Tibial artery (tissue), 4 donors: ENCODE measurements at regions of chr14 and their contacts with region 1.

Region 1: DNA sequence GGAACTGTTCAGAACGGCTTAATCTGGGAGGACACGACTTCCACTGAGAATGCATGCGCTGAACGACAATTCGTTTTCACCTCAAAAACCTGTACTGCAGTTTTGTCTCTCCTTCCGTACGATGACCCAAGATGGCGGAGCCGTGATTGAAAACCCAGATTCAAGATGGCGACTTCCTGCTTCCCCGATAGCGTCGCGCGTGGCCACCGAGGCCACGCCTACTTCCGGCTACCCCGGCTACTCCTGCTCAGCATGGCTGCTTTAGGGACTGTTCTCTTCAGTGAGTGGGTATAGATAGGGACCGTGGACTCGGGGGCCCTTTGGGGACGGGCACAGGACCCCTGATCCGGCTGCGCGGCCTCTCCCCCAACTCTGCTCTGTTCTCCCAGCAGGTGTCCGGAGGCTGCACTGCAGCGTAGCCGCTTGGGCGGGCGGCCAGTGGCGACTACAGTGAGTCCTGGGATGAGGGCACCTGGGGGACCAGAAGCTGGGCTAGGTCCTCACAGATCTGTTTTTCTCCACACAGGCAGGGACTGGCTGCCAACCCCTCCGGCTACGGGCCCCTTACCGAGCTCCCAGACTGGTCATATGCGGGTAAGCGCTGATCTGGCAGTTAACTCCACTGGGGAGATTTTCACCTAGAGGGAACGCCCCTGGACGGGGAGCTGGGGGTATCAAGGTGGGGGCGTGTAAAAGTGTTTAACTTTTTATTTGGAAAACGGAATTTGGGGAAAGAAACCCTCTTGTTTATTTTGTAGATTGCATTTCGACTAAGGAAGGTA is at the start of gene MRPL52:
- DNase-seq: peak; percentile 90 to 94
- H3K4me3 ChIP-seq: peak within 1 kb of the TSS; percentile 67 to 90
- H3K27ac ChIP-seq: peak within 1 kb of the TSS; percentile 77 to 81
- H3K4me1 ChIP-seq: peaks cover 0 to 10% (median 9%) of the 10 kb centered on the region in 4 donors
- H3K27me3 ChIP-seq: no peaks in the 10 kb centered on the region
- CTCF ChIP-seq: no peak

Region 2: GRCh38 chr14:22766456-22767322 is 63.2 kb before region 1 on chr14 and contains the start of gene OXA1L:
- intact Hi-C with region 1: loop called (anchors 10 kb)
- DNase-seq: peak; percentile 97 to 99
- H3K4me3 ChIP-seq: peak within 1 kb of the TSS; percentile 73 to 83
- H3K27ac ChIP-seq: peak within 1 kb of the TSS; percentile 74 to 88
- H3K4me1 ChIP-seq: peaks cover 0 to 19% (median 15%) of the 10 kb centered on the region in 4 donors
- H3K27me3 ChIP-seq: no peaks in the 10 kb centered on the region
- CTCF ChIP-seq: no peak

Region 3: DNA sequence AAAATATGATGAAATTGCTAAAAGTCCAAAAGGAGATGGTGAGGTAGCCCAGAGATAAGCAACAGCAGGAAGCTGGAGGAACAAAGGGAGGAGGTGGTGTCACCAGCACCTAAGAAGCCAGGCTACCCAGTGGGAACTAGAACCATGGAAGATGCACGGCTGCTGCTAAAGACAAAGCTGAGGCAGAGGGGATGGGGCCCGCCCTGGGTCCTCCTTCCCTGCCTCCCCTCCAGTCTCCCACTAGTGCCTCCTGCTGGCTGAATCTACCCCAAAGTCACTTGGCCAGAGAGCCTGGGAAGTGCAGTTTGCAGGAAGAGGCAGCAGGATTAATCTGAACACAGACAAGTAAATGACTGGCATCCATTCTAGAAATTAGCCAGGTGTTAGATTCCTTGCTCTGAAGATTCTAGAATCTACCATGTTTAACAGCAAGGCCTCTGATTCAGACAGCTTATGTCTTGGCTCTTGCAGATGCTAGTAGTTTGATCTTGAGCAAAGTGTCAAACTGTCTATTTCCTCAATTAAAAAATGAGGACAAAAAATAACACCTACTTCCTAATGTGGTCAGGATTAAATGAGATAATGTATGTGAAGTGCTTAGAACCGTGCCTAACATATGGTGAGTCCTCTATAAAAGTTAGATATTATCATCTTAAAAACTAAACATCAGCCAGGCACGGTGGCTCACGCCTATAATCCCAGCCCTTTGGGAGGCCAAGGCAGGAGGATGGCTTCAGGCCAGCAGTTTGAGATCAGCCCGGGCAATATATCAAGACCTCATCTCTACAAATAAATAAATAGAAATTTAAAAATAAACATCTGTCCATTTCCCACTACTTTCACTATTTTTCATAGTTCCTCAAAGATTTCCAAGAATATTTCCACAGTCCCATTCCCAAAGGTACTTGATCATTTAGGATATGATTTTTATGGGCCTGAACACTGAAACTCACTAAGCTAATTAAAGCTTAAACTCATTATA is 35.9 kb after region 1 on chr14:
- intact Hi-C with region 1: loop called (anchors 5 kb)
- DNase-seq: peak in 1 of 2 donors; percentile 10
- H3K4me3 ChIP-seq: no peak overlapping the region
- H3K27ac ChIP-seq: no peak overlapping the region
- H3K4me1 ChIP-seq: peaks cover 0 to 17% (median 14%) of the 10 kb centered on the region in 4 donors
- H3K27me3 ChIP-seq: no peaks in the 10 kb centered on the region
- CTCF ChIP-seq: no peak